ENCODE measurements at regions of chr10 and their contacts with region 1.

Region 1: GRCh38 chr10:15370856-15371701 is at the start of gene FAM171A1:
- DNase-seq: peak; percentile 36 to 79 (median 72)
- ATAC-seq: peak; percentile 71
- H3K4me3 ChIP-seq: peak within 1 kb of the TSS; percentile 44
- H3K27ac ChIP-seq: no peak within 1 kb of the TSS
- H3K4me1 ChIP-seq: peaks cover 0 to 15% of the 10 kb centered on the region in 2 experiments; a peak in 2 of 5 replicates
- H3K27me3 ChIP-seq: peaks cover 9 to 28% of the 10 kb centered on the region in 2 experiments
- CTCF ChIP-seq: peak in 2 of 3 experiments; percentile 48 to 65; a peak in 4 of 6 replicates
- EP300 ChIP-seq: no peak
- POLR2A ChIP-seq: no peak
- RAD21 ChIP-seq: peak in 1 of 2 experiments; percentile 58; a peak in 2 of 4 replicates
- polyA plus RNA-seq, gene FAM171A1: 0.51 to 0.94 TPM

Region 2: DNA sequence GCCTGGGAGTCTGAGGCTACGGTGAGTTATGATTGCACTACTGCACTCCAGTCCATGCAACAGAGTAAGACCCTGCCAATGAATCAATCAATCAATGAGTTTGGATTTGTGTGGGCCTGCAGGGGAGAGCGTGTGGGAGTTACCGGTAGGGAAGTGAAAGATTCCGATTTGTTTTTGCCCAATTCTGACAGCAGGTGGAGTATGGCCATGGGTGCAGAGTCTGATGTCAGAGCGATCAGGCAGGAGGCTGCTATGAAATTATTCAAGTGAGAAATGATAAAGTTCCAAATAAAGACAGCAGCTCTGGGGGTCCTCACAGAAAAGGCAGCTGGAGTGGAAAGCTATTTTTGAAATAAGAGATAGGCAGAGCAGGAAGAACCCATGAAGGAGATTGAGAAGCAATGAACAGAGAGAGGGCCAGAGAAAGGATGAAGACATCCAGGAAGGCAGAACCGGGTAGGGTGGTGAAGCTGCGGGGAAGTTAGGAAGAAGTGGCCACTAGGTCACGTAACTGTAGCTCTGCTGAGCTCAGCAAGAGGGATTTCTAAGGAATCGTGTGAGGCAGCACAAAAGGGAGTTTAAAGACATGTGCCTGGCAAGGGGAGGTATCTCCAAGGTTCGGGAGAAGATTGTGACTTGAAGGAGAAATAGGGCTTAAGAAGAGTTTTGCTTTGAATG is 108.9 kb before region 1 on chr10:
- CTCF ChIA-PET with region 1: interaction called, 6 read pairs
- POLR2A ChIA-PET with region 1: no interaction called
- in situ Hi-C with region 1: no loop called
- intact Hi-C with region 1: loop called (anchors 5 kb)
- DNase-seq: peak in 1 of 4 experiments; percentile 20
- ATAC-seq: 0 out of 3 replicates have a peak, but pooled peaks have one; percentile 42
- H3K4me3 ChIP-seq: no peak overlapping the region
- H3K27ac ChIP-seq: no peak overlapping the region
- H3K4me1 ChIP-seq: no peaks in the 10 kb centered on the region
- H3K27me3 ChIP-seq: peaks cover 0 to 5% of the 10 kb centered on the region in 2 experiments; a peak in 3 of 5 replicates
- CTCF ChIP-seq: peak; percentile 37 to 51 (median 41); a peak in 4 of 6 replicates
- EP300 ChIP-seq: no peak
- POLR2A ChIP-seq: no peak
- RAD21 ChIP-seq: peak; percentile 43 to 53

Region 3: GRCh38 chr10:15313843-15314242 is 57.2 kb before region 1 on chr10:
- CTCF ChIA-PET with region 1: no interaction called
- POLR2A ChIA-PET with region 1: no interaction called
- in situ Hi-C with region 1: no loop called
- intact Hi-C with region 1: loop called (anchors 5 kb)
- DNase-seq: peak; percentile 32 to 88 (median 56)
- ATAC-seq: peak; percentile 90
- H3K4me3 ChIP-seq: peak overlapping the region; percentile 2; the same call in 1 of the 2 replicates
- H3K27ac ChIP-seq: peak overlapping the region; percentile 74
- H3K4me1 ChIP-seq: peaks cover 6 to 23% of the 10 kb centered on the region in 2 experiments
- H3K27me3 ChIP-seq: no peaks in the 10 kb centered on the region
- CTCF ChIP-seq: no peak
- EP300 ChIP-seq: peak; percentile 87
- POLR2A ChIP-seq: peak; percentile 48; the same call in 1 of the 2 replicates
- RAD21 ChIP-seq: peak in 1 of 2 experiments; percentile 29; a peak in 2 of 4 replicates

Measured in K562 (cell line).